CD14-positive monocyte (primary cell): ENCODE measurements at regions of chr2 and their contacts with region 1.

Region 1: DNA sequence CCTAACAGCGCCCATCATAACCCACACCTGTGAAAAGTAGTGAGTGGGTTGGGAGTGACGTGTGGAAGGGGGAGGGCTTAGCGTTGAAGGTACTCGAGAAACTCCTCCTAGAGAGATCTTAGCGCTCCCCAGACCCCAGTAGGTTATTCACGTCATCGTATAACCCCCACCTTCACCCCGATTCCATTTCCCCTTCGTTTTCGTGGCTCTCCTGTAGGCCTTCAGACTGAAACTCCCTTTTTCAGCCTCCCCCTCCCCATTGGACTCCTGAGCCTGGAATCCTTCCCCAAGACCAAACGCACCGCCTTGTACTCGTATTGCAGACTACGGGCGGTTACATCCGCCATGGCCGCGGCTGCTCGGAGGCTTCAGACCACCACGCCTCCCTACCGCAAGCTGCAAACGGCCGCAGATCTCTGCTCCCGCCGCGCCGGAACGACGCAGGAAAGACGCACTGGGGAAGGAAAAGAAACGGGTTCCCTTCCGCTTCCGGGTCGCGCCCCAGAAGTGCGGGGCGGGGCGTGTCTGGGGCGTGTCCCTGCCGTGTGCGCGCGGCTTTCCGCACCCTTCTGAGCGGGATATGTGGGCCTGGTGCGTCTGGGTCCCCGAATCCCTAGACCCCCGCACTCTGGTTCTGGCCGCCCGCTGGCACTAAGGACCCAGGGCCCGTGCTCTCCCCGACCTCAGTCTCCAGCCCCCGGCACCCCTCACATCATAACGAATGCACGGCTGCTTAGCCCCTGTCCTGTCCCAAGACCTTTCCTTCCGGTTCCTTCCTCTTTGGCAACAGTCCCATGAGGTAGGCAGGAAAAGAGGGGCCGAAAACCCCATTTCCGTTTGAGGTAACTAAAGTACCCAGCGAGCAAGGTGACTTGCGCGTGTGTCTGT is at the start of gene SNRNP200:
- DNase-seq: peak; percentile 81 to 86 (median 83)
- H3K4me3 ChIP-seq: peak within 1 kb of the TSS; percentile 83 to 97 (median 93)
- H3K4me3 Mint-ChIP-seq: peak within 1 kb of the TSS; percentile 98 to 99
- H3K27ac ChIP-seq: peak within 1 kb of the TSS; percentile 57 to 90
- H3K27ac Mint-ChIP-seq: peak within 1 kb of the TSS; percentile 93 to 98 (median 97)
- H3K4me1 ChIP-seq: peaks cover 13 to 19% of the 10 kb centered on the region in 2 donors
- H3K4me1 Mint-ChIP-seq: peaks cover 32% of the 10 kb centered on the region
- H3K27me3 ChIP-seq: no peaks in the 10 kb centered on the region
- H3K27me3 Mint-ChIP-seq: peaks cover 0 to 3% (median 0%) of the 10 kb centered on the region in 3 donors
- CTCF ChIP-seq: no peak
- polyA plus RNA-seq, gene SNRNP200: 27.2 to 122 (median 36.1) TPM

Region 2: DNA sequence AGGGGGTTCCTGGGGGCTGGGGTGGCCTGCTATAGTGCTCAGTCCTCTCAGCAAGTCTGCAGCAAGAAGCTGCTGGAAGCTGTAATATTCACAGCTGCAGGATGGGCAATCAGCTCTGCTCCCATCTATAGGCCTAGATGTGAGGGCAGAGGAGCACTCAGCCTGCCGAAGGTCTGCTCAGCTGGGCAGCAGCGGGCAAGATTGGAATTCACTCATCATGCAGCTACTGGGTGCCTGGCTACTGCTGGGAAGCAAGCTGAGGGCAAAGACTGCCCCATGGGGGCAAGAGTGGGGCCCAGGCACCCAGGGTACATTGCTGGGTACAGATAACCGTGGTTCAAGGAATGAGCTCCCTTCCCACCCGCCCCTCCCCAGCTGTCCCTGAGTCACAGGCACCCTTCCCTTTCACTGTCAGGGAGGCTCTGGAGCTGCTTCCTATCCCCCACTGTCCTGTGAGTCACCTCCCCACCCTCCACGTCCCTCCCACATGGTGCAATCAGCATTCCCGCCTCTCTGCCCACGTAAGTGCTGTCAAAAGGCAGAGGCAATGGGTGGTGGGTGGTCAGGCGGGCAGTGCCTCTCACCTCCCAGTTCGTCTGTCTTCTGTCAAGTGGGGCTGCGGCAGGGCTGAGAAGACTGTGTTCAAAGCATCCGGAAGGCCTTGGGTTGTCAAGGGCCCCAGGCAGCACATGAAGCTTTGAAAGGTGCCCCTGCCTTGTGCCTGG is 544.4 kb before region 1 on chr2:
- intact Hi-C with region 1: no loop called
- DNase-seq: no peak
- H3K4me3 ChIP-seq: no peak overlapping the region
- H3K4me3 Mint-ChIP-seq: no peak overlapping the region
- H3K27ac ChIP-seq: no peak overlapping the region
- H3K27ac Mint-ChIP-seq: no peak overlapping the region
- H3K4me1 ChIP-seq: no peaks in the 10 kb centered on the region
- H3K4me1 Mint-ChIP-seq: no peaks in the 10 kb centered on the region
- H3K27me3 ChIP-seq: no peaks in the 10 kb centered on the region
- H3K27me3 Mint-ChIP-seq: peaks cover 0 to 2% (median 2%) of the 10 kb centered on the region in 3 donors
- CTCF ChIP-seq: no peak

Region 3: GRCh38 chr2:96180521-96180920 is 124.8 kb before region 1 on chr2:
- intact Hi-C with region 1: no loop called
- DNase-seq: no peak
- H3K4me3 ChIP-seq: no peak overlapping the region
- H3K4me3 Mint-ChIP-seq: no peak overlapping the region
- H3K27ac ChIP-seq: no peak overlapping the region
- H3K27ac Mint-ChIP-seq: no peak overlapping the region
- H3K4me1 ChIP-seq: no peaks in the 10 kb centered on the region
- H3K4me1 Mint-ChIP-seq: peaks cover 3% of the 10 kb centered on the region
- H3K27me3 ChIP-seq: no peaks in the 10 kb centered on the region
- H3K27me3 Mint-ChIP-seq: peaks cover 0 to 4% (median 2%) of the 10 kb centered on the region in 3 donors
- CTCF ChIP-seq: no peak

Region 4: DNA sequence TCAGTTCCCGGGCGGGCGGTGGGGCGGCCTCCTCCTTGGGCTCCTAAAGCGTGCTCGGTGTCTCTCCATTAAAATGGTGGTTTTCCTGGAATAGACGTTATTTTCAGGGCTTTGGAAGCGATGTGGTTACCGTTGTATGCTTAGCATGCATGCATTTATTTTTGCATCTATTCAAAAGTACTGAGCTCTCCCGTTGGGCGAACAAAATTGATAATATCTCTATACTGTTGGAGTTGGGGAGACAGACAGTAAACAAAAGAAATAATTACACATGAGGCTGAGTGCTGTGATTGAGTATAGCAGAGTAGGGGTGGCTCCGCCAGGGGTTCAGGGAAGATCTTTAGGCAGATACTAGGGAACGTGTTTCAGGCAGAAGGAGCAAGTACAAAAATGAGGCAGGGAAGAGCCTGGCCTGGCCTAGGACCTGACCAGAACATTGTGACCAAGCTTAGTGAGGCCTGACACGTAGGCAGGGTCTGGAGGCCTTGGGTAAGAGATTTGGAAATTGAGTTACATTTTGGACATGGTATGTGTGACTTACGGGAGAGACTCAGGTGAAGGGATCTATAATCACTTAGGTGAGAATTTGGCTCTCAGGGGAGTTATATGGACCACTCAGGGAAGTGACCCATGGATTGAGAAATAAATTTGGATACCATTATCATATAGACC is 30.9 kb after region 1 on chr2:
- intact Hi-C with region 1: loop called in 1 of 2 experiments (anchors 2 kb)
- DNase-seq: no peak
- H3K4me3 ChIP-seq: peak overlapping the region; percentile 57 to 90 (median 82)
- H3K4me3 Mint-ChIP-seq: peak overlapping the region; percentile 86 to 93
- H3K27ac ChIP-seq: peak overlapping the region; percentile 5 to 97
- H3K27ac Mint-ChIP-seq: peak overlapping the region; percentile 34 to 96 (median 88)
- H3K4me1 ChIP-seq: peaks cover 27 to 30% of the 10 kb centered on the region in 2 donors
- H3K4me1 Mint-ChIP-seq: peaks cover 40% of the 10 kb centered on the region
- H3K27me3 ChIP-seq: no peaks in the 10 kb centered on the region
- H3K27me3 Mint-ChIP-seq: peaks cover 0 to 1% (median 0%) of the 10 kb centered on the region in 3 donors
- CTCF ChIP-seq: no peak